Heart left ventricle (tissue), 16 donors: ENCODE measurements at regions of chr1 and their contacts with region 1.

Region 1: DNA sequence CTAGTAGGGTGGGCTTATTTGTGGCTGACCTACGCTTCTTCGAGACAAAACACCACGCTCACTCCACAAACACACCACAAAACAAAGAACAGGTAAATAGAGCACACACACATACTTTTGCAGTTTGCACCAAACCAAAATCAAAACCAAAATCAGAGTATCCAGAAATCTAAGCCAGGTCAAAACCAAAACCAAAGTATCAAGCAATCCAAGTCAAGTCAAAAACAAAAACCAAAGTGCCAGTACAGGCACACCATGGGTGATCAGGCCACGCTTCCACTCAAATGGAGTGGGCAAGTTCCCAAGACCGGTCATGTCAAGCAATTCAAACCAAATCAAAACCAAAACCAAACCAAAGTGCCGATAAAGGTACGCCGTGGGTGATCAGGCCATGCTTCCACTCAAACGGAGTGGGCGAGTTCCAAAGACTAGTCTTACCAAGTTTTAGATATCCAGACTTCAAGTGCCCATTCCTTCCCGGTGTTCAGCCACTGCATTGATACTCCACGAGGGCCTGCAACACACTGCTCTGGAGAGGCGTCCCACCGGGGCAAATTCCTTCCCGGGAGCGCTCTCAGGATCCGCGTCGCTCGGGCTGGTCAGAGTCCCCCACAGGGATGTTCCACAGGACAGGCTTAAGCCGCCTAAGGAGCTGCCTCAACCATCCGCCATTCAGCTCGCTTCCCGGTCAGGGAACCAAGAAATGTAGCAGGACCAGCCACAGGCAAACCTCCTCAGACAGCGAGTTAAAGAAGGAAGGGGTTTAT is 169.1 kb downstream of the CDC7 start:
- DNase-seq: no peak
- ATAC-seq: no peak
- H3K4me3 ChIP-seq: no peak overlapping the region
- H3K27ac ChIP-seq: no peak overlapping the region
- H3K4me1 ChIP-seq: no peaks in the 10 kb centered on the region
- H3K27me3 ChIP-seq: no peaks in the 10 kb centered on the region
- CTCF ChIP-seq: no peak
- POLR2A ChIP-seq: no peak

Region 2: DNA sequence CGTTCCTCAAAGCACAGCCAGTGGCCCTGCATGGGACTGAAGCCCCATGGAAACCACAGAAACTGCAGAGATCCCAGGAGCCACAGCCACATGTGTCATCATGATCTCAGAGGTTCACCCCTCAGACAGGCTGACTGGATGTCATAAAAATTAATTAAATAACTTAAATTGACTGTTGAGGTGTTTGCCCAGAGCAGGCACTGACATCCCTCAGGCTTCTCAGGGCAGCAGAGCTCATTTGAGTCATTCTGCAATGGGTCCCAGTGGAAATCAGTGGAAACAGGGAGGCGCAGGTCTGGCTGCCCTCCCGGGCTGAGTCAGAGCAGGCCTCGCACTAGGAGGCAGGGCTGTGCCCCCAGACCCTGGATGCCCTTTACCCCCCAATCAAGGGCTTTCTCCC is 34.0 kb before region 1 on chr1:
- intact Hi-C with region 1: no loop called
- DNase-seq: no peak
- ATAC-seq: peak in 2 of 4 donors; percentile 18 to 56
- H3K4me3 ChIP-seq: no peak overlapping the region
- H3K27ac ChIP-seq: no peak overlapping the region
- H3K4me1 ChIP-seq: no peaks in the 10 kb centered on the region
- H3K27me3 ChIP-seq: no peaks in the 10 kb centered on the region
- CTCF ChIP-seq: no peak
- POLR2A ChIP-seq: no peak

Region 3: DNA sequence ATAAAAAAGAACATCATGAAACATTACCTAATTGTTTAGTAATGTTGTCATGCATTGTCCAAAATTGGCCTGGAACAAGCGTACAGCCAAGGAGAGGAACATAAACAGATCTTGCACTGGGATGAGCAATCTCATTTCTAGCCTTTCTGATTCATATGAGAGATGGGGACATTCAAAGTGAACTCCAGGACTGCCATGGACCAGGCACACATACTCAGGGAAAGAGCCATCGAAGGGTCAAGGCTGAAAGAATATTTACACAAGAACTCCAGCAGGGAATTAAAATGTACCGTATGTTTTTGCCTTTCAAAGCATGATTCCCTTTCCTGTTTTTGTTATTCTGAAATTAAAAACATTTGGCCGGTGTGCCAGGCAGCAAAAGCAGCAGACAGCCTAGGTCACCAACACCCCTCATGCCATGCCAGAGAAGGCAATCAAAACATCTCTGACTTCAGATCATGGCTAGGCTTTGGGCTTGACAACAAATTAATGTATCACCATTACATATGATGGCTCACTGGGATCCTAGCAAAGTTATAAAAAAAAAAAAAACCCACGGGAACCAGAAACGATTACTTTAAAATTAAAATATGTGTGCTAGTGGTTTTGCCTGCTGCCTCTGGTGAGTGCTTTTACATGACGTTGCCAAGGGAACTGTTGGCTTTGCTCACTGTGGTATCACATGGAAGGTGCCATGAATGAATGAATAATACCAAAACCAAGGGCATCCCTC is 56.4 kb after region 1 on chr1:
- intact Hi-C with region 1: loop called in 1 of 10 experiments (anchors 10 kb)
- DNase-seq: no peak
- ATAC-seq: peak; percentile 83 to 94 (median 88)
- H3K4me3 ChIP-seq: no peak overlapping the region
- H3K27ac ChIP-seq: peak overlapping the region; percentile 55 to 92 (median 78)
- H3K4me1 ChIP-seq: peaks cover 0 to 59% (median 36%) of the 10 kb centered on the region in 12 donors
- H3K27me3 ChIP-seq: no peaks in the 10 kb centered on the region
- CTCF ChIP-seq: no peak
- POLR2A ChIP-seq: no peak